B cell (primary cell): ENCODE measurements at regions of chr11 and their contacts with region 1.

Region 1: GRCh38 chr11:73597956-73598718 is at the start of gene FAM168A:
- DNase-seq: peak; percentile 96
- ATAC-seq: peak; percentile 92
- H3K4me3 ChIP-seq: peak within 1 kb of the TSS; percentile 68 to 91 (median 71)
- H3K4me3 Mint-ChIP-seq: peak within 1 kb of the TSS; percentile 91
- H3K27ac ChIP-seq: peak within 1 kb of the TSS; percentile 77 to 78
- H3K27ac Mint-ChIP-seq: peak within 1 kb of the TSS; percentile 92
- H3K4me1 ChIP-seq: peaks cover 8 to 15% of the 10 kb centered on the region in 2 donors
- H3K4me1 Mint-ChIP-seq: peaks cover 32% of the 10 kb centered on the region
- H3K27me3 ChIP-seq: no peaks in the 10 kb centered on the region
- H3K27me3 Mint-ChIP-seq: no peaks in the 10 kb centered on the region
- CTCF ChIP-seq: peak; percentile 34
- total RNA-seq, gene FAM168A: 23.3 and 26.8 TPM in 2 replicates

Region 2: GRCh38 chr11:73147771-73148681 is 450.1 kb before region 1 on chr11:
- CTCF ChIA-PET with region 1: no interaction called
- POLR2A ChIA-PET with region 1: interaction called, 11 read pairs
- intact Hi-C with region 1: no loop called
- DNase-seq: peak; percentile 23
- ATAC-seq: no peak
- H3K4me3 ChIP-seq: no peak overlapping the region
- H3K4me3 Mint-ChIP-seq: peak overlapping the region; percentile 45
- H3K27ac ChIP-seq: peak overlapping the region; percentile 3 to 64
- H3K27ac Mint-ChIP-seq: peak overlapping the region; percentile 91
- H3K4me1 ChIP-seq: peaks cover 98 to 100% of the 10 kb centered on the region in 2 donors
- H3K4me1 Mint-ChIP-seq: peaks cover 98% of the 10 kb centered on the region
- H3K27me3 ChIP-seq: no peaks in the 10 kb centered on the region
- H3K27me3 Mint-ChIP-seq: no peaks in the 10 kb centered on the region
- CTCF ChIP-seq: no peak

Region 3: DNA sequence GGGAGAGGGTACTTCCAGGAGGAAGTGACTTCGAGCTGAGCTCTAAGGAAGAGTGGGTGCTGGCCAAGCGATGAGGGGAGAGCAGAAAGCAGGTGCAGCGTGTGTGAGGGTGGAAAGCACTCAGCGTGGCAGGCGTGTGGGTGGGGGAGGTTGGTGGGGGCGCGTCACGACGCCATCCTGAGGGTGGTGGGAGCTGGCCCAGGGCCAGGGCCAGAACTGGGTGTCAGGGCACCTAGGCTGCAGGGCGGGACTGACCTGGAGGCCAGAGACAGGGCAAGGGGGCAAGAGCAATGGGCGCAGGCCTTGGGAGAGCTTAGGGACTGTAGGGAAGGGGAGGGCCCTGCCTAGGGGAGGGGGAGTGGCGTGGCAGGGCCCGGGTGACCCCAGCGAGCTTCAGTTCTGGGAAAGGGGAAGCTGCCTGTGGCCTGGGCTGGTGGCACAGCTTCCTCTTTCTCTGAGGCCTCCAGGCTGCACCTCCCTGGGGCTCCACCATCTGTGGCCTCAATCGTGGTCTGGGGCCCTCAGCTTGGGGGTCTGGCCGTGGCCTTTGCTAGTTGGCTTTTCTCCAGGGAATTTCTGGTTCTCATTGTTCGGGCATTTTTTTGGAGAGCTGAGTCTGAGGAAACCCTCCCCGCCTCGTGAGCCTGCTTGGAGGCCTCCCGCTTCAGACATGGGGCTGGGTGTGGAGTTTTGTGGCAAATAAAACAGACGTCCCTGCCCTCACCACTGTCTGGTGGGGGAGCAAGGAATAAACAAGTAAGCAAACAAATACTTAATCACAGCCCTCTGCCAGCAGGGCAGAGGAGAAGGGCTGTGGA is 213.1 kb before region 1 on chr11:
- CTCF ChIA-PET with region 1: no interaction called
- POLR2A ChIA-PET with region 1: no interaction called
- intact Hi-C with region 1: loop called (anchors 1 kb)
- DNase-seq: peak; percentile 96
- ATAC-seq: peak; percentile 69
- H3K4me3 ChIP-seq: peak overlapping the region in 4 of 5 experiments; percentile 31 to 58 (median 42)
- H3K4me3 Mint-ChIP-seq: peak overlapping the region; percentile 100
- H3K27ac ChIP-seq: peak overlapping the region; percentile 98
- H3K27ac Mint-ChIP-seq: peak overlapping the region; percentile 99
- H3K4me1 ChIP-seq: peaks cover 100% of the 10 kb centered on the region in 2 donors
- H3K4me1 Mint-ChIP-seq: peaks cover 99% of the 10 kb centered on the region
- H3K27me3 ChIP-seq: no peaks in the 10 kb centered on the region
- H3K27me3 Mint-ChIP-seq: no peaks in the 10 kb centered on the region
- CTCF ChIP-seq: no peak

Region 4: GRCh38 chr11:73612601-73613140 is 14.5 kb after region 1 on chr11:
- CTCF ChIA-PET with region 1: no interaction called
- POLR2A ChIA-PET with region 1: no interaction called
- intact Hi-C with region 1: no loop called
- DNase-seq: no peak
- ATAC-seq: no peak
- H3K4me3 ChIP-seq: no peak overlapping the region
- H3K4me3 Mint-ChIP-seq: no peak overlapping the region
- H3K27ac ChIP-seq: no peak overlapping the region
- H3K27ac Mint-ChIP-seq: no peak overlapping the region
- H3K4me1 ChIP-seq: no peaks in the 10 kb centered on the region
- H3K4me1 Mint-ChIP-seq: no peaks in the 10 kb centered on the region
- H3K27me3 ChIP-seq: no peaks in the 10 kb centered on the region
- H3K27me3 Mint-ChIP-seq: peaks cover 17% of the 10 kb centered on the region
- CTCF ChIP-seq: no peak

Region 5: GRCh38 chr11:73647459-73648100 is 49.4 kb after region 1 on chr11:
- CTCF ChIA-PET with region 1: interaction called, 5 read pairs
- POLR2A ChIA-PET with region 1: no interaction called
- intact Hi-C with region 1: loop called (anchors 1 kb)
- DNase-seq: peak; percentile 92
- ATAC-seq: peak; percentile 100
- H3K4me3 ChIP-seq: peak overlapping the region in 4 of 5 experiments; percentile 23 to 56 (median 48)
- H3K4me3 Mint-ChIP-seq: peak overlapping the region; percentile 87
- H3K27ac ChIP-seq: no peak overlapping the region
- H3K27ac Mint-ChIP-seq: peak overlapping the region; percentile 87
- H3K4me1 ChIP-seq: peaks cover 11 to 20% of the 10 kb centered on the region in 2 donors
- H3K4me1 Mint-ChIP-seq: peaks cover 23% of the 10 kb centered on the region
- H3K27me3 ChIP-seq: peaks cover 0 to 5% (median 0%) of the 10 kb centered on the region in 4 experiments
- H3K27me3 Mint-ChIP-seq: peaks cover 4% of the 10 kb centered on the region
- CTCF ChIP-seq: no peak

Region 6: GRCh38 chr11:74748211-74749127 is 1150.3 kb after region 1 on chr11 and contains the start of gene RNF169:
- CTCF ChIA-PET with region 1: no interaction called
- POLR2A ChIA-PET with region 1: no interaction called
- intact Hi-C with region 1: loop called (anchors 5 kb)
- DNase-seq: peak; percentile 96
- ATAC-seq: peak; percentile 98
- H3K4me3 ChIP-seq: peak within 1 kb of the TSS; percentile 53 to 81 (median 73)
- H3K4me3 Mint-ChIP-seq: peak within 1 kb of the TSS; percentile 93
- H3K27ac ChIP-seq: peak within 1 kb of the TSS; percentile 87 to 90
- H3K27ac Mint-ChIP-seq: peak within 1 kb of the TSS; percentile 98
- H3K4me1 ChIP-seq: peaks cover 19 to 24% of the 10 kb centered on the region in 2 donors
- H3K4me1 Mint-ChIP-seq: peaks cover 34% of the 10 kb centered on the region
- H3K27me3 ChIP-seq: no peaks in the 10 kb centered on the region
- H3K27me3 Mint-ChIP-seq: no peaks in the 10 kb centered on the region
- CTCF ChIP-seq: no peak
- total RNA-seq, gene RNF169: 27.3 and 28.4 TPM in 2 replicates